Caco-2 (cell line): ENCODE measurements at regions of chr4 and their contacts with region 1.

Region 1: GRCh38 chr4:106809076-106809475 is 227.0 kb downstream of the DKK2 start:
- DNase-seq: peak; percentile 40
- H3K4me3 ChIP-seq: no peak overlapping the region
- H3K4me3 Mint-ChIP-seq: no peak overlapping the region
- H3K27ac Mint-ChIP-seq: no peak overlapping the region
- H3K4me1 ChIP-seq: peaks cover 8% of the 10 kb centered on the region
- H3K4me1 Mint-ChIP-seq: peaks cover 13% of the 10 kb centered on the region
- H3K27me3 ChIP-seq: no peaks in the 10 kb centered on the region
- H3K27me3 Mint-ChIP-seq: no peaks in the 10 kb centered on the region
- CTCF ChIP-seq: peak; percentile 34 to 43

Region 2: DNA sequence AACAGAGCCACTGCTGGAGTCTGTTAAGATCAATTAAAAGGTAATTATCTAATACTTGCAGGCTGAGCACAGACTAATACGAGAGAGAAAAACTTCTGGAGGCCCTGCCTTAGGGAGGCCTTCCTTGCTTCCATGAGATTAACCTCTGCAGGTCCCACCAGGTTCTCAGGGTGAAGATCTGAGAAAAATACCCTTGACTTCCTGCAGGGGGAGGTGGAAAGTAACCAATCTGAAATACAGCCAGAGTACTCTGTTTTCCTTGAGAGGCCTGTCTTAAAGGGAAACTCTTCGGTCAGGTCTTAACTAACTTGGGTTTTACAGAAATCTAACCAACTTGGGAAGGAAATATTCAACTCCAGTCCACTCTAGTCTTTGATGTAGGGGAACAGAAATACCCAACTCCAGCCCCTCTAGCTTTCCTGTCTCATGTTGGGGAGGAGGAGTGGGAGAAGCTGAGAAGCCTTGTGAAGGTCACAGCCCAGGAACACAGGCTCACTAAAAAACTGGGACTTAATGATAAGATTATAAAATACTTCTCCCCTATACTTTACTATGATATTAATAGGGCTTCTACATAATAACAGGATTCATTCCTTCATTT is 570.2 kb before region 1 on chr4:
- CTCF ChIA-PET with region 1: no interaction called
- POLR2A ChIA-PET with region 1: no interaction called
- intact Hi-C with region 1: loop called (anchors 2 kb)
- DNase-seq: peak; percentile 50 to 70
- H3K4me3 ChIP-seq: no peak overlapping the region
- H3K4me3 Mint-ChIP-seq: no peak overlapping the region
- H3K27ac Mint-ChIP-seq: peak overlapping the region; percentile 12
- H3K4me1 ChIP-seq: no peaks in the 10 kb centered on the region; the same call in 1 of the 2 replicates
- H3K4me1 Mint-ChIP-seq: peaks cover 14% of the 10 kb centered on the region
- H3K27me3 ChIP-seq: no peaks in the 10 kb centered on the region
- H3K27me3 Mint-ChIP-seq: no peaks in the 10 kb centered on the region
- CTCF ChIP-seq: peak; percentile 74 to 81

Region 3: DNA sequence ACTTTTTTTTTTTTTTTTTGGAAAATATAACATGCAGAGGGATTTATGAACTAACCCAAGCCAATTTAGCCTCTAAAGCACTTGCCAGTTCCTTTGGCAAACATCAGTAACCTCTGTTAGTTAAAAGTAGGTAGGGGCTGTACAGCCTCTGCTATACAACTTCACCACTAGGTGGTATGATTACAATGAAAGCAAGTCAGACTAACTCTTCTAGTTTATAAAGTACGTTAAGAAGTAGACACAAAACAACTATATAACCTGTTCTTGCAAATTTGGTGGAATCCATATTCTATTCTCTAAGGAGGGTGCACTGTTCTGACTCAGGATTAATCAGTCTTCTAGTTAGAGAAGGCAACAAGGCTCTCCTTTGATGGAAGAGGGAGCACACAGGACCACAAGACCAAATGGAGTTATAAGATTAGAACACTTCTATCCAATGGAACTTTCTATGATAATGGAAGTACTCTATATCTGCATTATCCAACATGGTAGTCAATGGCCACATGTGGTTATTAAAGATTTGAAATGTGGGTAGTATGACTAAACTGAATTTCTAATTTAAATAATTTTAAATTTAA is 479.9 kb before region 1 on chr4:
- CTCF ChIA-PET with region 1: no interaction called
- POLR2A ChIA-PET with region 1: no interaction called
- intact Hi-C with region 1: loop called (anchors 1 kb)
- DNase-seq: peak in 1 of 2 experiments; percentile 50
- H3K4me3 ChIP-seq: no peak overlapping the region
- H3K4me3 Mint-ChIP-seq: no peak overlapping the region
- H3K27ac Mint-ChIP-seq: no peak overlapping the region
- H3K4me1 ChIP-seq: peaks cover 5% of the 10 kb centered on the region
- H3K4me1 Mint-ChIP-seq: peaks cover 6% of the 10 kb centered on the region
- H3K27me3 ChIP-seq: no peaks in the 10 kb centered on the region
- H3K27me3 Mint-ChIP-seq: no peaks in the 10 kb centered on the region
- CTCF ChIP-seq: peak; percentile 44 to 71

Region 4: DNA sequence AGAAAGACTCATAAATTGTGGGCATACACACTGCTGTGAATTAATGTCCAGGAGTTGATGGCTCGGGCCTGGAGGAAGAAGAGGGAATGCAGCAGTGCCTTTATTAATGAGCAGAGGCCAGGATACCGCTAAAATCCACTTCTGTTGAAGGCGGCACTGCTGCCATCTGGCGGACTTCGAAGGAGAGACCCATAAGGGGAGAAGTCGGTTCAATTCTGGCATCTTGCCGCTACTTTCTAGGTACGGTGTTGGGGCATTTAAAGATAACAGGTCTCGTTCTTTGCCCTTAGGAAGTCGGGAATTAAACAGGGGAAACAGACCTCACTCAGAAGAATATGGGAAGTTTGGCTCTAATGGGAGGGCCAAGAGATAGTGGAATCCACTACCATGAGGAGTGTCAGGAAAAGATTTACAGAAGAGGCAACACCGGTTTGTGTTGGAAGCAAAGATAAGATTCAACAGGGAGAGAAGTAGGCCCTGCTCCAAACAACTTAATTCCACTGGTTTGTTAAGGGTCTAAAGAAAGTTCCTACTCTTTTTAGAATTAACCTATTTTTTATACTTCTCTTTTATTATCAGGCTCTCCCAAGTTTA is 306.9 kb before region 1 on chr4:
- CTCF ChIA-PET with region 1: no interaction called
- POLR2A ChIA-PET with region 1: no interaction called
- intact Hi-C with region 1: loop called (anchors 10 kb)
- DNase-seq: peak; percentile 28 to 53
- H3K4me3 ChIP-seq: no peak overlapping the region
- H3K4me3 Mint-ChIP-seq: no peak overlapping the region
- H3K27ac Mint-ChIP-seq: no peak overlapping the region
- H3K4me1 ChIP-seq: peaks cover 6% of the 10 kb centered on the region; the same call in 1 of the 2 replicates
- H3K4me1 Mint-ChIP-seq: no peaks in the 10 kb centered on the region
- H3K27me3 ChIP-seq: no peaks in the 10 kb centered on the region
- H3K27me3 Mint-ChIP-seq: no peaks in the 10 kb centered on the region
- CTCF ChIP-seq: peak; percentile 16 to 34

Region 5: GRCh38 chr4:106691749-106692148 is 117.3 kb before region 1 on chr4:
- CTCF ChIA-PET with region 1: no interaction called
- POLR2A ChIA-PET with region 1: no interaction called
- intact Hi-C with region 1: loop called (anchors 1 kb)
- DNase-seq: peak in 1 of 2 experiments; percentile 16
- H3K4me3 ChIP-seq: no peak overlapping the region
- H3K4me3 Mint-ChIP-seq: no peak overlapping the region
- H3K27ac Mint-ChIP-seq: no peak overlapping the region
- H3K4me1 ChIP-seq: no peaks in the 10 kb centered on the region
- H3K4me1 Mint-ChIP-seq: no peaks in the 10 kb centered on the region
- H3K27me3 ChIP-seq: no peaks in the 10 kb centered on the region
- H3K27me3 Mint-ChIP-seq: no peaks in the 10 kb centered on the region
- CTCF ChIP-seq: peak in 1 of 2 experiments; percentile 40

Region 6: GRCh38 chr4:106898621-106899230 is 89.7 kb after region 1 on chr4:
- CTCF ChIA-PET with region 1: no interaction called
- POLR2A ChIA-PET with region 1: no interaction called
- intact Hi-C with region 1: loop called (anchors 1 kb)
- DNase-seq: peak; percentile 38 to 57
- H3K4me3 ChIP-seq: no peak overlapping the region
- H3K4me3 Mint-ChIP-seq: no peak overlapping the region
- H3K27ac Mint-ChIP-seq: no peak overlapping the region
- H3K4me1 ChIP-seq: no peaks in the 10 kb centered on the region
- H3K4me1 Mint-ChIP-seq: peaks cover 6% of the 10 kb centered on the region
- H3K27me3 ChIP-seq: no peaks in the 10 kb centered on the region
- H3K27me3 Mint-ChIP-seq: peaks cover 4% of the 10 kb centered on the region
- CTCF ChIP-seq: peak; percentile 67 to 68

Region 7: GRCh38 chr4:107044170-107044569 is 235.1 kb after region 1 on chr4:
- CTCF ChIA-PET with region 1: no interaction called
- POLR2A ChIA-PET with region 1: no interaction called
- intact Hi-C with region 1: no loop called
- DNase-seq: no peak
- H3K4me3 ChIP-seq: no peak overlapping the region
- H3K4me3 Mint-ChIP-seq: no peak overlapping the region
- H3K27ac Mint-ChIP-seq: no peak overlapping the region
- H3K4me1 ChIP-seq: no peaks in the 10 kb centered on the region
- H3K4me1 Mint-ChIP-seq: no peaks in the 10 kb centered on the region
- H3K27me3 ChIP-seq: no peaks in the 10 kb centered on the region
- H3K27me3 Mint-ChIP-seq: no peaks in the 10 kb centered on the region
- CTCF ChIP-seq: no peak